Activated CD8-positive, alpha-beta T cell treated with anti-CD3 and anti-CD28 coated beads, Interleukin-2, amount 10 ng/mL, durations not matched to agents 7 days and 5 days (primary cell): ENCODE measurements at regions of chr9 and their contacts with region 1.

Region 1: DNA sequence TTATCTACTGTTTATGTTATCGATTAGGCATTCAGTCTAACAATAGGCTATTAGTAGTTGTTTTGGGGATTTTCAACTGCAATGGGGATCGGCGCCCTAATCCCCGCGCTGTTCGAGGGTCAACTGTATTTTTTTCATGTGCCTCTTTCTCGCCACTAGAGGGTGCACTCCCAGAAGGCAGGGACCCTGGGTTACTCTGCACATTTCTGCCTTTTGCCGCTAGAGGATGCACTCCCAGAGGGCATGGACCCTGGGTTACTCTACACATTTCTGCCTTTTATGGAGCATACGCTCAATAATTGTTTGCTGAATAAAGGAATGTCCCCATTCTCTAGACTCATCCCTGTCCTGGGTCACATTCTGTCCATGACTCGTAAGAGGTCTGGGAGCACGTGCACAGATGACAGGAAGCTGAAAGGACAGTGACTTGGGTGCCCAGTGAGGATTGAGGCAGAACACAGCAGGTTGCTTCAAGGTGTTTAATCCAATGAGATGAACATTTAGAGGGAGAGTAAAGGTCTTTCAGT is 27.9 kb upstream of the RECK start:
- DNase-seq: peak; percentile 84
- ATAC-seq: peak; percentile 99
- H3K4me3 Mint-ChIP-seq: no peak overlapping the region
- H3K27ac Mint-ChIP-seq: no peak overlapping the region
- H3K4me1 Mint-ChIP-seq: peaks cover 10% of the 10 kb centered on the region
- H3K27me3 Mint-ChIP-seq: peaks cover 51% of the 10 kb centered on the region

Region 2: DNA sequence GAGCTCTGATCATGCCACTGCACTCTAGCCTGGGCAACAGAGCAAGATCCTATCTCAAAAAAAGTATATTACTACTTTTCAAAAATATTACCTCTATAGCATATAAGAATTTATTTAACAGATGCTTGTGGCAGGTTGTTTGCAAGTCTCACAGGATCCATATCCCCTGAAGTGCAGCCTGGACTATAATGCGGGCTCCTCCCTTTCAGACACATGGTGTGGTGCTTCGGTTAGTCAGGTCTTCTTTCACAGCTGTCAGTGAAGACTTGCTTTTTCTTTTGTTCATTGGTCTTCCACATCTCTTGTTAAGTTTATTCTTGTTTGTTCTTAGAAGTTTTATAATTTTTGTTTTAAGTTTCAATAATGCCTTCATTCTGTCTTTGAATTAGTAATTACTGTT is 112.3 kb before region 1 on chr9:
- CTCF ChIA-PET with region 1: no interaction called
- POLR2A ChIA-PET with region 1: no interaction called
- DNase-seq: no peak
- ATAC-seq: no peak
- H3K4me3 Mint-ChIP-seq: no peak overlapping the region
- H3K27ac Mint-ChIP-seq: no peak overlapping the region
- H3K4me1 Mint-ChIP-seq: no peaks in the 10 kb centered on the region
- H3K27me3 Mint-ChIP-seq: peaks cover 40% of the 10 kb centered on the region

Region 3: GRCh38 chr9:35945341-35946018 is 63.4 kb before region 1 on chr9:
- CTCF ChIA-PET with region 1: interaction called, 13 read pairs
- POLR2A ChIA-PET with region 1: no interaction called
- DNase-seq: peak; percentile 78
- ATAC-seq: peak; percentile 60
- H3K4me3 Mint-ChIP-seq: no peak overlapping the region
- H3K27ac Mint-ChIP-seq: no peak overlapping the region
- H3K4me1 Mint-ChIP-seq: peaks cover 15% of the 10 kb centered on the region
- H3K27me3 Mint-ChIP-seq: peaks cover 3% of the 10 kb centered on the region

Region 4: DNA sequence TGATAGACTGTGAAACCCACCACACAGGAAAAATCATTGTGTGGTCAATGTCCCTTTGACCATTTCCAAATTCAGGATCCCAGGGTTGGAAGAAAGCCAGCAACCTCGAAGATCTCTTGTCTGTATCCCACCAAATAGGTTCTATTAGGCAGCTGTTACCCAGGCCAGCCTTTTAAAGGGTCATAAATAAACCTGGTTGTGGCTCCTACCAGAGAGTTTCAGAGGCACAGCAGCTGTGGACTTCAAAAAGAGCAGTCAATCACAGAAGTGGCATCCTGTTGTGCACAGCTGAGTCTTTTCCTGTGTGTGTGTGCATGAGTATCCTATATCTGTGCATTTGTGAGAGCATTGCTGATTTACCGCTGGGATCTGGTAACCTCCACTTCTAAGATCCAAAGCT is 27.1 kb before region 1 on chr9:
- CTCF ChIA-PET with region 1: interaction called, 11 read pairs
- POLR2A ChIA-PET with region 1: no interaction called
- DNase-seq: no peak
- ATAC-seq: no peak
- H3K4me3 Mint-ChIP-seq: no peak overlapping the region
- H3K27ac Mint-ChIP-seq: no peak overlapping the region
- H3K4me1 Mint-ChIP-seq: peaks cover 4% of the 10 kb centered on the region
- H3K27me3 Mint-ChIP-seq: peaks cover 45% of the 10 kb centered on the region

Region 5: DNA sequence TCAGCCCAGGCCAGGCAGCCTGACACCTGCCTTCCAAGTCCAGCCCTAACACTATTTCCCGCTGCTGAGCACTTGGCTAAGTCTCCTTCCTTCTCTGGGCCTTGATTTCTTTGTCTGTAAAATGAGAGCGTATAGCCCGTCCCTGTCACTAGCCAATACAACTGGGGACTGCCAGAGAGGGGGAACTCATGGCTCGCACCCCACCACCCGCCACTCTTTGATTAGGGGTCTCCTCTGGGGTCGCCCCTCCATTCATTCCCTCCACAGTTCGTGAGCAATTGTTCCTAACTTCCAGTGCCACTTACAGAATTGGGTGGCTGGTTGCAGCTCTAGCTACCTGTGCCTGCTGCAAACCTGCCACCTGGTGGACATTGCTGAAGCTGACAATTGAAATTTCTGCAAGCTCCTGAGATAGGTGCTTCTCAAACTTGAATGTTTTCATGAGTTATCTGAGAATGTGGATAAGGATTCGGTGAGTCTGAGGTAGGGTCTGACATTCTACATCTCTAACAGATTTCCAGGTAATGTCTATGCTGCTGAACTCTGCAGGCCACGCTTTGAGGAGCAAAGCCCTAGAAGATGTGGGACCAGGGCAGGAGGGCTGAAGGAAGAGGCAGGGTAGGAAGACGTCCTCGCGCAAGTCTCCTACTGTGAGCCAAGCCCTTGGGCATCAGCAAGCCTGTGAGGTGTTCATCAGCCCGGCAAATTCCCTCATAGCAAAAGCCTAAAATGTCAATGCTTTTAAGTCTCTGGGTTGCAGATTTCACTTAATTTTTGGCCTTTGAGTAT is 14.6 kb after region 1 on chr9:
- CTCF ChIA-PET with region 1: interaction called, 129 read pairs
- POLR2A ChIA-PET with region 1: no interaction called
- DNase-seq: peak; percentile 79
- ATAC-seq: peak; percentile 88
- H3K4me3 Mint-ChIP-seq: no peak overlapping the region
- H3K27ac Mint-ChIP-seq: no peak overlapping the region
- H3K4me1 Mint-ChIP-seq: no peaks in the 10 kb centered on the region
- H3K27me3 Mint-ChIP-seq: peaks cover 6% of the 10 kb centered on the region

Region 6: DNA sequence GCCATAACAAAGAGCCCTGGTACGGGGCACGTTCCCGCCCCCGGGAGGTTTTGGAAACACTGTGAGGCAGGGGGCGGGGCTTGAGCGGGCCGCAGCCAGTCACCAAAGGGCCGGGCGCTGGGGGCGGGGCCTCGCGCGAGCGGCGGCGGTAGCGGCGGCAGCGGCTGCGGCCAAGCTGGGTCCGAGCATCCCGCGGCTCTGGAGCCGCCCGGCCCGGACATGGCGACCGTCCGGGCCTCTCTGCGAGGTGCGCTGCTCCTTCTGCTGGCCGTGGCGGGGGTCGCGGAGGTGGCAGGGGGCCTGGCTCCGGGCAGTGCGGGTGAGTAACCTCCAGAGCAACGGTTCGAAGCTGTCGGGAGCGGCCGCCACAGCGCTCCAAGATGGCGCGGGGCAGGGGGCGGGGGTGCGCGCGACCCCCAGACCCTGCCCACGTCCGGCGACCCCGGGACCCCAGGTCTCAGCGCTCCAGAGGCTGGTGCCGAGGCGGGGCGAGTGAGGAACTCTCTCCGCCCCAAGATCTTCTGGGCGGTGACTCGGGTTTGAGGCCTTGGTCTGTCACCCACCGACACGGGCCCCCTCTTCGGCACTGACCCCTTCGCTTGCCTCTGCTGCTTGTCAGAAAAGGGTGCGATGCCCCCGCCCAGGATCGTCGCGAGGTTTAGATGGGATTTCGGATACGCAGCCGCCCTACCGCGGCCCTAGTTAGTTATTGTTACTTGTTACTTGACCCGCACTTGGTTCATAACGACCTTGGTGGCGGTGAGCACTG is 28.1 kb after region 1 on chr9 and contains the start of gene RECK:
- CTCF ChIA-PET with region 1: interaction called, 10 read pairs
- POLR2A ChIA-PET with region 1: no interaction called
- DNase-seq: peak; percentile 88
- ATAC-seq: peak; percentile 93
- H3K4me3 Mint-ChIP-seq: peak within 1 kb of the TSS; percentile 87
- H3K27ac Mint-ChIP-seq: peak within 1 kb of the TSS; percentile 68
- H3K4me1 Mint-ChIP-seq: peaks cover 40% of the 10 kb centered on the region
- H3K27me3 Mint-ChIP-seq: peaks cover 20% of the 10 kb centered on the region
- total RNA-seq, gene RECK: 5.7 to 7.3 TPM